Activated naive CD4-positive, alpha-beta T cell treated with anti-CD3 and anti-CD28 coated beads for 36 hours (primary cell): ENCODE measurements at regions of chr9 and their contacts with region 1.

Region 1: DNA sequence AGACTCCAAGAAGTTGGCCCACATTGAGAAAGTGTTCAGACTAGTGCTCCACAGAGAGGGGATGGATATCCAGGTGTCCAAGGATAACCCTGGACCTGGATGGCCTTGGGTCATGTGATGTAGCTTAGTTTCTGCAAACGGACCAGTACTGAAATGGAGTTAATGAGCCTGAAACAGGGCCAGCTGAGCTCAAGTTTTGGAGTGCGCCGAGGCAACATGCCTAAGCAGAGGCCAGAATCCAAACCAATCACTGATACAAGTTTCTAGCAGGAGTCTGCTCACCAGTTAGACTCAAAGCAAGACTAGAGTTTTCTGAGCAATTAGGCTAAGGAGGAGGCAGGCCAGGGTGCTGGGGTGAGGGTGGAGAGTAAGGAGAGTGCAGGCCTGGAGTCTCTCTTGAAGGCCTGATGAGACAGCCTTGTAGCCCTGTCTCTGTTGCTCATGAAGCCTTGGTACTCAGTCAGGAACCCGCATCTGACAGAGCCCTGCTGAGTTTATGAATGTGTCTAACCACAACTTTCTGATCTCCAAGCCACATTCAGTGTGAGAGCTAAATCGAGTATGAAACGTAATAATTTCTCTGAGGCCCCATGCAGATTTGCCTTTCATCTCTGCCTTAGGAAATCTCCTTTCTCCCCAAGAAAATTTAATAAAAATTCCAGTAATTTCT is 68.9 kb upstream of the EQTN start:
- DNase-seq: peak; percentile 85
- H3K4me3 Mint-ChIP-seq: no peak overlapping the region
- H3K27ac Mint-ChIP-seq: peak overlapping the region; percentile 87
- H3K4me1 Mint-ChIP-seq: peaks cover 40% of the 10 kb centered on the region
- H3K27me3 Mint-ChIP-seq: peaks cover 6% of the 10 kb centered on the region

Region 2: DNA sequence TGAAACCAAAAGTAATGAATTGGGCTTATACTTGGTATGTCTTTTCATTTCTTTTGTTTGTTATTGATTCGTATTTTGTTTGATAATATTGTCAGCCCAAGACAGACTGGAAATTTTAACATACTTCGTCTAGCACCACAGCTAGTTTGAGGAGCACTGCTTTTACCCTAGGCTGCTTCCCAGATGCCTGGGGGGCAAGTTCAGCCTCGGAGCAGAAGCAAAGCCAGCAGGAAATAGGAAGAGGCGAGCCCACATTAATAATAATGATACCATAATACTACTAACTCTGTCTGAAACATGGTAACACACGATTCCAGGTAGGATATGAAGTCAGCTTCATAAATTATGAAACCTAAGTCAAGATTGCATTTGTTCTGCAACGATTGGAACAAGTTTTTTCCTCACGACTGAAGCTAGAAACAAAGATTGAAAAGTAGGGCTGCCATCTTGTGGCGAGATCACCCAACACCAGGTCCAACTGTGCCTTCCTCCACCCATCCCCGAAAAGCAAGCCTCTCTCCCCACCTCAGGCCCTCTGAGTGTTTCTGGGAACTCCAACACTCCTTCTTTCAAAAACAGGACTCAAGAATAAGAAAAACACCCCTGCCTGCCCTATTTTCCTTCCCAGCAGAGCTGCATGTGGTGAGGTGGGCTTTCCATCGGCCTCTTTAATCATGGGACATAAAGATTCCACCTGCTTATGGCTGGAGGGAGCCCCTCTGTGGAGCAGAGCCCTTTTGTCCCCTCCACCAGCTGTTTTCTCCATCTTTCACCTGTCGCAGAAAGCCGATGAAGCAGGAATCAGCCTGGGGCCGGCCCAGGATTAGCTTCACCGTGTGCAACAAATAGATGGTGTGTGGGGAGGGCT is 709.6 kb before region 1 on chr9:
- CTCF ChIA-PET with region 1: no interaction called
- intact Hi-C with region 1: no loop called
- DNase-seq: peak; percentile 5
- H3K4me3 Mint-ChIP-seq: no peak overlapping the region
- H3K27ac Mint-ChIP-seq: no peak overlapping the region
- H3K4me1 Mint-ChIP-seq: no peaks in the 10 kb centered on the region
- H3K27me3 Mint-ChIP-seq: peaks cover 5% of the 10 kb centered on the region

Region 3: GRCh38 chr9:26892251-26893029 is 473.4 kb before region 1 on chr9 and contains the start of gene CAAP1:
- CTCF ChIA-PET with region 1: no interaction called
- intact Hi-C with region 1: loop called (anchors 5 kb)
- DNase-seq: peak; percentile 96
- H3K4me3 Mint-ChIP-seq: peak within 1 kb of the TSS; percentile 99
- H3K27ac Mint-ChIP-seq: peak within 1 kb of the TSS; percentile 100
- H3K4me1 Mint-ChIP-seq: peaks cover 28% of the 10 kb centered on the region
- H3K27me3 Mint-ChIP-seq: no peaks in the 10 kb centered on the region
- total RNA-seq, gene CAAP1: 16.1 to 18.1 TPM

Region 4: GRCh38 chr9:26928902-26929495 is 436.8 kb before region 1 on chr9:
- CTCF ChIA-PET with region 1: no interaction called
- intact Hi-C with region 1: no loop called
- DNase-seq: no peak
- H3K4me3 Mint-ChIP-seq: no peak overlapping the region
- H3K27ac Mint-ChIP-seq: no peak overlapping the region
- H3K4me1 Mint-ChIP-seq: peaks cover 1% of the 10 kb centered on the region
- H3K27me3 Mint-ChIP-seq: no peaks in the 10 kb centered on the region

Region 5: GRCh38 chr9:27117489-27118135 is 248.2 kb before region 1 on chr9:
- CTCF ChIA-PET with region 1: no interaction called
- intact Hi-C with region 1: no loop called
- DNase-seq: no peak
- H3K4me3 Mint-ChIP-seq: no peak overlapping the region
- H3K27ac Mint-ChIP-seq: no peak overlapping the region
- H3K4me1 Mint-ChIP-seq: no peaks in the 10 kb centered on the region
- H3K27me3 Mint-ChIP-seq: peaks cover 4% of the 10 kb centered on the region

Region 6: DNA sequence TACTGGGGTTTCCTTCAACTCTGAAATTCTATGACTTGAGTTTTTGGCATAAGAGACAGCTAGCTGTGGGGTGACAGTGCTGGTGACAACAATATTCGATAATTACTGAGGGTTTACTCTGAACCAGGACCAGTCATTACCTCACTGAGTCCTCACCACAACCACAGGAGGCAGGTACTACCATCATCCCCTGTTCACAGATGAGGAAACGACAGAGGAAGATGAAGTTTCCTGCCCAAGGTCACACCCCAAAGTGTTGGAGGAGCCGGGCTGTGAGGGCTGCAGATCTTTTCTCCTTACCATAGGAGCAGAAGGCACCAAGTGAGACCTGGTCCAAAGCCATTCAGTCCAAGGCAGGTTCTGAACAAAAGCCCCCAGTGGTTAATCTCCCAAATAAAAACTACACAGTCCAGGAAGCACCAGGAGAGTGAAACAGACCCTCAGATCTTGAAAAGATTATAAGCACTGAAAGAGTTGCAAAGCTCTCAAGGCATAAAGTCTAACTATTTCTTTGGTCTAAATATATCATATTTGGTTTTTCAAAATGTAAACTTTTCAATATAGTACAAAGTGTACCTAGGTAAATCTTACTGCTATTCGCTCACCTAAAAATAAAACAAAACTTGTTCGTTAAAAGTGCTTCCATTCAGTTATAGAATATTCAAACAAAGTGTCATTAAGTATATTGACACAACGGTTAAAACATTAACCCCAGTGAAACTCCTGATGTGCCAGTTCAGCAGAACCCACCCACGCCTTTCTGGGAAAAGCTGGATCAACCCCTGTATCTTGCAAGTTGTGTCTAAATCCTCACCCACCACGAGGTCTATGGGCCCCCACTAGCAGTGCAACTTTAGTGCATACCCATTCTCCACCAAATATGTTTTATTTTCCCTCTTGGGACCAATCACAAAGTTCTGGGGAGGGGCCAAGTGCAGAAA is 13.7 kb after region 1 on chr9:
- CTCF ChIA-PET with region 1: interaction called, 4 read pairs
- intact Hi-C with region 1: loop called (anchors 1 kb)
- DNase-seq: peak; percentile 54
- H3K4me3 Mint-ChIP-seq: no peak overlapping the region
- H3K27ac Mint-ChIP-seq: no peak overlapping the region
- H3K4me1 Mint-ChIP-seq: peaks cover 6% of the 10 kb centered on the region
- H3K27me3 Mint-ChIP-seq: no peaks in the 10 kb centered on the region

Region 7: DNA sequence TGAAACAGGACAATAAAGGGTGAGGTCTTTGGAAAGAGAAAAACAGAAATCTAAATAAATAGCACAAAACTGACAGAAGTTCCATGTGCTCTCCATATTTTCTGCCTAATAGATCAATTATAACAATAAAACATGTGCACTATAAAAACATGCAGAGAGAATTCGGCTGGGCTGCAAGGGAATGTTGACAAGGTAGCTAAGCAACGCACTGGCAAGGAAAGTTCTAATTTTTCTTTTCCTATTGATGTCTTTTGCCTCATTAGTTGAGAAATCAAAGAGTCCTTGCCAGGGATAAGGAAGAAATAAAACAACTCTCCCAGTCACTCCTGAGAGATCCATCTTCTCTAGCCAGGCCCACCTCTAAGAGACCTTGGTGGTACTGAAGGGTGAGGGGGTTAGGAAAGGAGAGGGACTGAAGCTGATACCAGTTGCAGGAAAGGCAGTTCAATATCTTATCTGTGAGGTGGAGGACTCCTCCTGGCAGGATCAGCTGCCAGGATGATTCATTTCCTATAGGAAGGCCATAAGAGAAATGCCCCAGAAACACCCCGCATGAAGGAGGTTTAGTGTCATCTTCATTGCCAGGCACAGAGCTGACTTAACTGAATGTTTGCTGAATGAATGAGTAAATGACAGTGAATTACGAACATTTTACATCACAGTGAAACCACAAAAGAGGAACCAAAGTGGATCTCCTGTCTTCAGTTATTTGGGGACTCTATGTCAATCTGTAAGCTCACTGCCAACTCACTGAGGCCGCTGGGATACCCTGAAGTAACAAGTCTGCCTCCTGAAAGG is 94.6 kb after region 1 on chr9:
- CTCF ChIA-PET with region 1: no interaction called
- intact Hi-C with region 1: loop called (anchors 1 kb)
- DNase-seq: peak; percentile 40
- H3K4me3 Mint-ChIP-seq: no peak overlapping the region
- H3K27ac Mint-ChIP-seq: no peak overlapping the region
- H3K4me1 Mint-ChIP-seq: peaks cover 19% of the 10 kb centered on the region
- H3K27me3 Mint-ChIP-seq: no peaks in the 10 kb centered on the region

Region 8: DNA sequence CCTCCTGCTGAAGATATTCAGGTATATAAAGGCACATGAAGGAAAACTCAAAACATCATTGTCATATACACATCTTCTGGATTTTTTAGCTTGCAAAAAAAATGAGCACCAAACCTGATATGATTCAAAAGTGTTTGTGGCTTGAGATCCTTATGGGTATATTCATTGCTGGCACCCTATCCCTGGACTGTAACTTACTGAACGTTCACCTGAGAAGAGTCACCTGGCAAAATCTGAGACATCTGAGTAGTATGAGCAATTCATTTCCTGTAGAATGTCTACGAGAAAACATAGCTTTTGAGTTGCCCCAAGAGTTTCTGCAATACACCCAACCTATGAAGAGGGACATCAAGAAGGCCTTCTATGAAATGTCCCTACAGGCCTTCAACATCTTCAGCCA is 158.4 kb after region 1 on chr9 and contains the start of gene IFNK:
- CTCF ChIA-PET with region 1: interaction called, 23 read pairs
- intact Hi-C with region 1: loop called (anchors 1 kb)
- DNase-seq: no peak
- H3K4me3 Mint-ChIP-seq: no peak within 1 kb of the TSS
- H3K27ac Mint-ChIP-seq: peak within 1 kb of the TSS; percentile 57
- H3K4me1 Mint-ChIP-seq: peaks cover 14% of the 10 kb centered on the region
- H3K27me3 Mint-ChIP-seq: peaks cover 8% of the 10 kb centered on the region
- total RNA-seq, gene IFNK: 0.24 TPM in 1 of 2 experiments, not detected in the other

Region 9: GRCh38 chr9:27573634-27574590 is 208.1 kb after region 1 on chr9:
- CTCF ChIA-PET with region 1: interaction called, 3 read pairs
- intact Hi-C with region 1: loop called (anchors 1 kb)
- DNase-seq: peak; percentile 99
- H3K4me3 Mint-ChIP-seq: peak overlapping the region; percentile 83
- H3K27ac Mint-ChIP-seq: peak overlapping the region; percentile 100
- H3K4me1 Mint-ChIP-seq: peaks cover 37% of the 10 kb centered on the region
- H3K27me3 Mint-ChIP-seq: no peaks in the 10 kb centered on the region